PC-9 (cell line): ENCODE measurements at regions of chr13 and their contacts with region 1.

Region 1: DNA sequence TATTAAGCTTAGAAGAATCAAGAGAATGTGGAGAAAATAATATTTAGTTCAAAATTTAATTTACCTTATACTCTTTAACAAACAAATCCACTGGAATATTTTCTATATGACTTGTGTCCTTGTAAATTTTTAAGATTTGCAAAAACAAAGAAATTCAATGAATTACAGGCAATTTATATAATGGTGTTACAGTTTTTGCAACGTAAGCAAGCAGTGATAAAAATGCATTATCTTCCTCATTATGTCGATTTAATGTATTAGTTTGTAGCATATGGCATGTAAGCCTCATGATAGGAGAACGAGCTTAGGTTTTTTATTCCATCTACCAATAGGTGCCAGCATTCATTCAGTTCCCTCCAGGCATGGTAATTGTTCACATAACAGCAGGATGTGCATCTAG is 100.0 kb upstream of the PCDH9 start:
- DNase-seq: no peak
- H3K4me3 ChIP-seq: no peak overlapping the region
- H3K27ac ChIP-seq: no peak overlapping the region
- H3K4me1 ChIP-seq: no peaks in the 10 kb centered on the region
- H3K27me3 ChIP-seq: no peaks in the 10 kb centered on the region
- CTCF ChIP-seq: no peak

Region 2: DNA sequence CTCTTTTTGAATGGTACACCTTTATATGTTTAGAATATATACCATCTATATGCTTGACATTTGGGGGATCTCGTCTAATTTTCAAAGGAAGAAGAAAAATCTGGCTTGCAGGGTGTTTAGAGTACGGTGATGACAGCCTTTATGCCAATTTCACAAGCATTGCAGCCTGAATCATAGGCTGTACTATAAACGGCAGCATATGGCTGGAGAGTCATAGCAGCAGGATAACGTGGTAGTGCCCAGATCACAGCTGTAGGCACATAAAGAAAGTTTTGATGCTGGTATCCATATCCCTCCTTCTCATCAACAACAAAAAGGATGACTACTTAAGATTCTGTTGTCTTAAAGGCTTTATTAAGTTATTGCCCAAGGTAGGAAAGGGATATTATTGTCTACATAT is 353.0 kb before region 1 on chr13:
- CTCF ChIA-PET with region 1: no interaction called
- POLR2A ChIA-PET with region 1: no interaction called
- intact Hi-C with region 1: no loop called
- DNase-seq: no peak
- H3K4me3 ChIP-seq: no peak overlapping the region
- H3K27ac ChIP-seq: no peak overlapping the region
- H3K4me1 ChIP-seq: no peaks in the 10 kb centered on the region
- H3K27me3 ChIP-seq: no peaks in the 10 kb centered on the region
- CTCF ChIP-seq: no peak

Region 3: DNA sequence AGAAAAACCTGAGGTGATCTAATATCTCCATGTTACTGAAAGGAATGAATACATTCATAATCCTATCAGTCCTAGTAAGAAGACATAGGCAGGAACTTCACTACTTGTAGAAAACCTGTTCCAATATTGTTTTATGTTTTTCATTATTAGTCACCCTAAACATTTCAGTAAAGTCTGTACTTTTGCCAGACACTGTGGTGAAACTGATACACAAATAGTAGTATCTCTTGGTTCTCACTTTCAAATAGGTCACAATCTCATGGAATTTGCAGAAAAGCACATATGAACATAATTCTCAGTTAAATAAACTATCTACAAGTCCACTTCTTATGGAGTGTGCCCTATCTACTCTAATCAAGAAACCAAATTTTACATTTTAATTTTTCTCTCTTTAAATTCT is 11.8 kb before region 1 on chr13:
- CTCF ChIA-PET with region 1: no interaction called
- POLR2A ChIA-PET with region 1: no interaction called
- intact Hi-C with region 1: no loop called
- DNase-seq: no peak
- H3K4me3 ChIP-seq: no peak overlapping the region
- H3K27ac ChIP-seq: no peak overlapping the region
- H3K4me1 ChIP-seq: no peaks in the 10 kb centered on the region
- H3K27me3 ChIP-seq: no peaks in the 10 kb centered on the region
- CTCF ChIP-seq: no peak

Region 4: DNA sequence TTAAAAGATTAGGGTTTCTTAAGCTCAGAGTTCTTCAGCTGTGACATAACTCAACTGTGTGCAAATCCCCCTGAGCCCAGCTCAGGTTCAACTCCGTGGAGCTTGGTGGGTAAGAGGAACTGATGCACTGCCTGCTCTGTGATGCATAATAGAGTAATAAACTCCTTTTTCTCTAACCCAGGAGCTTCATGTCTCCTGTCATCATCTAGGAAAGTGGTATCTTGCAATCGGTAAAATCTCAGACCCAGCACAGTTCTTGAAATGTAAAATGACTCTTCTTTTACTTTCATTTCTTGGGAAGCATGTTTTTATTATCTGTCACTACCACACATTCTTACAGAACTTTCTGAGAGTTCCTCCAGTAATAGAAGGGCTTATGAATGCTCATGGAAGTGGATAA is 23.8 kb after region 1 on chr13:
- CTCF ChIA-PET with region 1: no interaction called
- POLR2A ChIA-PET with region 1: no interaction called
- intact Hi-C with region 1: no loop called
- DNase-seq: no peak
- H3K4me3 ChIP-seq: no peak overlapping the region
- H3K27ac ChIP-seq: no peak overlapping the region
- H3K4me1 ChIP-seq: no peaks in the 10 kb centered on the region
- H3K27me3 ChIP-seq: no peaks in the 10 kb centered on the region
- CTCF ChIP-seq: no peak

Region 5: GRCh38 chr13:67408798-67409197 is 78.6 kb after region 1 on chr13:
- CTCF ChIA-PET with region 1: no interaction called
- POLR2A ChIA-PET with region 1: no interaction called
- intact Hi-C with region 1: no loop called
- DNase-seq: no peak
- H3K4me3 ChIP-seq: no peak overlapping the region
- H3K27ac ChIP-seq: no peak overlapping the region
- H3K4me1 ChIP-seq: no peaks in the 10 kb centered on the region
- H3K27me3 ChIP-seq: no peaks in the 10 kb centered on the region
- CTCF ChIP-seq: no peak

Region 6: GRCh38 chr13:67932991-67933390 is 602.8 kb after region 1 on chr13:
- CTCF ChIA-PET with region 1: interaction called, 10 read pairs
- POLR2A ChIA-PET with region 1: no interaction called
- intact Hi-C with region 1: no loop called
- DNase-seq: no peak
- H3K4me3 ChIP-seq: no peak overlapping the region
- H3K27ac ChIP-seq: no peak overlapping the region
- H3K4me1 ChIP-seq: no peaks in the 10 kb centered on the region
- H3K27me3 ChIP-seq: no peaks in the 10 kb centered on the region
- CTCF ChIP-seq: no peak